Activated B cell treated with CpG ODN at 0.5 μM for 24 hours (primary cell): ENCODE measurements at regions of chr16 and their contacts with region 1.

Region 1: GRCh38 chr16:46908540-46909372 is 24.6 kb downstream of the GPT2 start:
- DNase-seq: peak; percentile 33
- ATAC-seq: peak; percentile 30
- H3K4me3 Mint-ChIP-seq: no peak overlapping the region
- H3K27ac Mint-ChIP-seq: no peak overlapping the region
- H3K4me1 Mint-ChIP-seq: peaks cover 56% of the 10 kb centered on the region
- H3K27me3 Mint-ChIP-seq: no peaks in the 10 kb centered on the region
- CTCF ChIP-seq: peak; percentile 77

Region 2: GRCh38 chr16:46853713-46854443 is 54.9 kb before region 1 on chr16:
- CTCF ChIA-PET with region 1: interaction called, 47 read pairs
- POLR2A ChIA-PET with region 1: interaction called, 3 read pairs
- intact Hi-C with region 1: loop called (anchors 1 kb)
- DNase-seq: peak; percentile 53
- ATAC-seq: peak; percentile 72
- H3K4me3 Mint-ChIP-seq: no peak overlapping the region
- H3K27ac Mint-ChIP-seq: no peak overlapping the region
- H3K4me1 Mint-ChIP-seq: peaks cover 17% of the 10 kb centered on the region
- H3K27me3 Mint-ChIP-seq: no peaks in the 10 kb centered on the region
- CTCF ChIP-seq: peak; percentile 63

Region 3: GRCh38 chr16:46883690-46884512 is 24.9 kb before region 1 on chr16 and contains the start of gene GPT2:
- CTCF ChIA-PET with region 1: interaction called, 6 read pairs
- POLR2A ChIA-PET with region 1: interaction called, 10 read pairs
- intact Hi-C with region 1: loop called (anchors 1 kb)
- DNase-seq: peak; percentile 85
- ATAC-seq: peak; percentile 95
- H3K4me3 Mint-ChIP-seq: peak within 1 kb of the TSS; percentile 89
- H3K27ac Mint-ChIP-seq: peak within 1 kb of the TSS; percentile 85
- H3K4me1 Mint-ChIP-seq: peaks cover 11% of the 10 kb centered on the region
- H3K27me3 Mint-ChIP-seq: peaks cover 2% of the 10 kb centered on the region
- CTCF ChIP-seq: no peak
- total RNA-seq, gene GPT2: 11.7 and 17.4 TPM in 2 replicates

Region 4: GRCh38 chr16:47073223-47074155 is 164.7 kb after region 1 on chr16:
- CTCF ChIA-PET with region 1: no interaction called
- POLR2A ChIA-PET with region 1: no interaction called
- intact Hi-C with region 1: no loop called
- DNase-seq: no peak
- ATAC-seq: no peak
- H3K4me3 Mint-ChIP-seq: no peak overlapping the region
- H3K27ac Mint-ChIP-seq: no peak overlapping the region
- H3K4me1 Mint-ChIP-seq: peaks cover 4% of the 10 kb centered on the region
- H3K27me3 Mint-ChIP-seq: no peaks in the 10 kb centered on the region
- CTCF ChIP-seq: no peak